ENCODE measurements at regions of chr14 and their contacts with region 1.

Region 1: GRCh38 chr14:91510174-91511042 is at the start of gene PPP4R3A:
- DNase-seq: peak; percentile 96
- H3K4me3 Mint-ChIP-seq: peak within 1 kb of the TSS; percentile 94
- H3K27ac Mint-ChIP-seq: peak within 1 kb of the TSS; percentile 95
- H3K4me1 Mint-ChIP-seq: peaks cover 20% of the 10 kb centered on the region
- H3K27me3 Mint-ChIP-seq: no peaks in the 10 kb centered on the region
- total RNA-seq, gene PPP4R3A: 92.4 to 96.4 TPM

Region 2: GRCh38 chr14:91317381-91318308 is 192.8 kb before region 1 on chr14:
- CTCF ChIA-PET with region 1: no interaction called
- POLR2A ChIA-PET with region 1: no interaction called
- intact Hi-C with region 1: loop called (anchors 5 kb)
- DNase-seq: peak; percentile 92
- H3K4me3 Mint-ChIP-seq: peak overlapping the region; percentile 60
- H3K27ac Mint-ChIP-seq: peak overlapping the region; percentile 94
- H3K4me1 Mint-ChIP-seq: peaks cover 78% of the 10 kb centered on the region
- H3K27me3 Mint-ChIP-seq: no peaks in the 10 kb centered on the region

Region 3: GRCh38 chr14:91493169-91493568 is 17.2 kb before region 1 on chr14:
- CTCF ChIA-PET with region 1: interaction called, 3 read pairs
- POLR2A ChIA-PET with region 1: interaction called, 7 read pairs
- intact Hi-C with region 1: loop called (anchors 2 kb)
- DNase-seq: no peak
- H3K4me3 Mint-ChIP-seq: no peak overlapping the region
- H3K27ac Mint-ChIP-seq: no peak overlapping the region
- H3K4me1 Mint-ChIP-seq: peaks cover 59% of the 10 kb centered on the region
- H3K27me3 Mint-ChIP-seq: no peaks in the 10 kb centered on the region

Region 4: GRCh38 chr14:91599994-91600393 is 89.6 kb after region 1 on chr14:
- CTCF ChIA-PET with region 1: no interaction called
- POLR2A ChIA-PET with region 1: no interaction called
- intact Hi-C with region 1: no loop called
- DNase-seq: no peak
- H3K4me3 Mint-ChIP-seq: no peak overlapping the region
- H3K27ac Mint-ChIP-seq: no peak overlapping the region
- H3K4me1 Mint-ChIP-seq: no peaks in the 10 kb centered on the region
- H3K27me3 Mint-ChIP-seq: no peaks in the 10 kb centered on the region

Region 5: DNA sequence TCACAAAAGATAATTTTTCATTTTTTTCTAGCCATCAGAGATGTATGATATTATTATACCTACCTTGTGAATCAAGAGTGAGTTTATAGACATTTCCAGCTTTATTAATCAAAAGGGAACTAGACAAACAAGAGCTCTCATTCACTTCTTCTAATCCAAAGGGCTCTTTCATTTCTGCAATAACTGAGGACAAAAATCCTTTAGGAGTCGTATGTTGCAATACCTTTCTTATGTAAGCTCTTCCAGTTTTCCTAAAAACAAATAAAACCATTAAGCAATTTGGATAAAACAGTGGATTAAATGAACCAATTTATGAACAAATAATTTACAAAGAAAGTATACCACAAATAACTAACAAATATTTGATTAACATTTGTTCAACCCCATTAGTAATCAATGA is 114.3 kb after region 1 on chr14:
- CTCF ChIA-PET with region 1: no interaction called
- POLR2A ChIA-PET with region 1: no interaction called
- intact Hi-C with region 1: no loop called
- DNase-seq: no peak
- H3K4me3 Mint-ChIP-seq: no peak overlapping the region
- H3K27ac Mint-ChIP-seq: no peak overlapping the region
- H3K4me1 Mint-ChIP-seq: no peaks in the 10 kb centered on the region
- H3K27me3 Mint-ChIP-seq: no peaks in the 10 kb centered on the region

Region 6: GRCh38 chr14:91866061-91866460 is 355.7 kb after region 1 on chr14:
- CTCF ChIA-PET with region 1: no interaction called
- POLR2A ChIA-PET with region 1: interaction called, 4 read pairs
- intact Hi-C with region 1: loop called (anchors 2 kb)
- DNase-seq: peak; percentile 73
- H3K4me3 Mint-ChIP-seq: peak overlapping the region; percentile 87
- H3K27ac Mint-ChIP-seq: peak overlapping the region; percentile 94
- H3K4me1 Mint-ChIP-seq: peaks cover 92% of the 10 kb centered on the region
- H3K27me3 Mint-ChIP-seq: no peaks in the 10 kb centered on the region

Region 7: DNA sequence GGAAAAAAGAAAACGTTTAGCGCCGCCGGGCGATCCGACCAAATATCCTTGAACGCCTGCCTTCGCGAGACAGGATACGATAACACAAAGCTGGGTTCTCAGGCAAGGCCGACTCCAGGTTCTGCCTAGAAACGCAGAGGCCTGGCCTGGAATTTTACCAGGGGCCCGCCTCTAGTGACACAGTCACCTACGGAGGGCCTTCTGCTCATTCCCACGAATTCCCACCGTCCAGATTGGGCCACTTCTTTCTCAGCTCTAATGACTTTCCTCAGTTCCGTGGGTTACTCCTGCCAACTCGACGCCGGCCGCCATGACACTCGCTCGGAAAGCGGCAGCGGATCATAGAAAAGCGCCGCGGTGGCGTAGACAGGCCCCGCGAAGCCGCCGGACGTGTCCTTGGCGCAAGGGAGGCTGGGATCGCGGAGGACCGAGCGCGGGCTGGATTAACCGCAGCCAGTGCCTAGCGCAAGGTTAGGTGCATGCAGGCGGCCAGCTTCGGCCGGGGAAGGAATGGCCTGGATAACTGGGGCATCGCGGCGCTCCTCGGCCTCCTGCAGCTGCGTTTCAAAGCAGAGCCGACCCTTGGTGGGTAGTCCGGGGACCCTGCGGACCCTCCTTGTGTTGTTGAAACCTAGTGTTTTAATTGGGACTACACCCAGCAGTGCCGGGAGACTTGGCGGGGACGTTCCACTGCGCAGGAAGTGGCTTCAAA is 529.5 kb after region 1 on chr14 and contains the start of gene TRIP11:
- CTCF ChIA-PET with region 1: no interaction called
- POLR2A ChIA-PET with region 1: interaction called, 8 read pairs
- intact Hi-C with region 1: loop called (anchors 1 kb)
- DNase-seq: peak; percentile 97
- H3K4me3 Mint-ChIP-seq: peak within 1 kb of the TSS; percentile 90
- H3K27ac Mint-ChIP-seq: peak within 1 kb of the TSS; percentile 93
- H3K4me1 Mint-ChIP-seq: peaks cover 31% of the 10 kb centered on the region
- H3K27me3 Mint-ChIP-seq: no peaks in the 10 kb centered on the region
- total RNA-seq, gene TRIP11: 35.9 to 37.0 TPM